ENCODE measurements at regions of chr6 and their contacts with region 1.

Region 1: DNA sequence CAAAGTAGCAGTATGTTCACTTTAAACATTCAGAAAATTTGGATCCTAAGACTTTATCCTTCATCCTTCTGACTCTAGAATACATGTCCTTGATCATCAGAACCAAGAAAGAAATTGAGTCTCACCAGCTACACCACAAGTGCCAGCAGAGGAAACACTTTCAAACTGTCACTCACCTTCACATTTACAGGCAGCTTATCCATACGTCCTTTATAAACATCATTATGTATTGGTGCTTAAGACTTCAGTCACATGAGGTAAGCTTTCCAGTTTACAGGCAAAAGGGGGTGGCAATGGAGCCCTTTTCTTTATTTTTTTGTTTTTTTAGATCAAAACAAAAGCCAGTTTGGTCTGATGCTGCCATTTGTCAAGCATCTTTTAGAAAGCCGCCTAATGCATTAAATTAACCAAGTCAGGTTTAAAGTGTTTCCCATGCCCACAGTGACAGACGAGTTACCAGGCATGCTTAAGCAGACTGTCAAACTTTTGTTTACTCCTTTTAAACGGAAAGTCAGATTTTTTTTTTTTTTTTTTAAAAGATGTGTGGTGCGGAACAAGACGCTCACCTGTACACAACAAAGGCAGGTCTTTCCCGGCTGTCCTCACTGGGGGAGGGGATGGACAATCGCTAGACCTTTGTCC is 952 bp upstream of the BRPF3 start:
- DNase-seq: no peak
- H3K4me3 Mint-ChIP-seq: peak overlapping the region; percentile 74
- H3K27ac Mint-ChIP-seq: peak overlapping the region; percentile 89
- H3K4me1 Mint-ChIP-seq: peaks cover 29% of the 10 kb centered on the region
- H3K27me3 Mint-ChIP-seq: peaks cover 7% of the 10 kb centered on the region

Region 2: DNA sequence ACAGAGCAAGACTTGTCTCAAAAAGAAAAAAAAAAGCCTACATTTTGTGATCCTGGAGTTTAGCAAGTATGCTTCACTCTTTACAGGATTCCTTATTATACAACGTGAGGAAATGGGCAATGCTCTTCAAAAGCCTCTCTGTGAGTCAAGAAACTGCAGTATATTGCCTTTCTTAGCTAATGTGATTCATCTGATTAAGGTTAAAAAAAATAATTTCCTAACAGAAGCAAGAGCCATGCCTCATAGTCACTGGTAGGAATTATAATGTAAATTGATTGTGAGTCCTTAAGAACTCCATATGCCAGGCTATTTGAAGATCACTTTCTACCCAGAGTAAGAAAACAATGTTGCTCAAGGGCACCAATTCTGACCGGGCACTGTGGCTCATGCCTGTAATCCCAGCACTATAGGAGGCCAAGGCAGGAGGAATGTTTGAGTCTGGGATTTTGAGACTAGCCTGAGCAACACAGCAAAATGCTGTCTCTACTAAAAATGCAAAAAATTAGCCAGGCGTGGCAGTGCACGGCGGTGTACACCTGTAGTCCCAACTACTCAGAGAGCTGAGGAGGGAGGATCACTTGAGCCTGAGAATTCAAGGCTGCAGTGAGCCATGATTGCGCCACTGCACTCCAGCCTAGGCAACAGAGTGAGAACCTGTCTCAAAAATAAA is 214.5 kb before region 1 on chr6:
- CTCF ChIA-PET with region 1: no interaction called
- DNase-seq: no peak
- H3K4me3 Mint-ChIP-seq: no peak overlapping the region
- H3K27ac Mint-ChIP-seq: no peak overlapping the region
- H3K4me1 Mint-ChIP-seq: no peaks in the 10 kb centered on the region
- H3K27me3 Mint-ChIP-seq: peaks cover 30% of the 10 kb centered on the region

Region 3: DNA sequence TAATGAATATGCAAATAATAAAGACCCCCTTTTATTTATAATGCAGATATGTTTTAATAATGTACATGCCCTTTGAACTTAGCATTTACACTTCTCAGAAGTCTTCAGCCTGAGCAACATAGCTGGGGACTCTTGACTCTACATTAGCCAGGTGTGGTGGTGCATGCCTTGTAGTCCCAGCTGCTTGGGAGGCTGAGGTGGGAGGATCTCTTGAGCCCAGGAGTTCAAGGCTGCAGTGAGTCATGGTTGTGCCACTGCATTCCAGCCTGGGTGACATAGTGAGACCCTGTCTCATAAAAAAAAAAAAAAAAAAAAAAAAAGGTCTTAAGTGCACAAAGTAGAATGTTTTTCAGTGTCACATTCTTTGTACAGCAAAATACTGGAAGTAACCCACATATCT is 82.5 kb before region 1 on chr6:
- CTCF ChIA-PET with region 1: no interaction called
- DNase-seq: no peak
- H3K4me3 Mint-ChIP-seq: no peak overlapping the region
- H3K27ac Mint-ChIP-seq: no peak overlapping the region
- H3K4me1 Mint-ChIP-seq: peaks cover 90% of the 10 kb centered on the region
- H3K27me3 Mint-ChIP-seq: no peaks in the 10 kb centered on the region

Region 4: GRCh38 chr6:36123257-36124139 is 72.1 kb before region 1 on chr6:
- CTCF ChIA-PET with region 1: interaction called, 10 read pairs
- DNase-seq: peak; percentile 93
- H3K4me3 Mint-ChIP-seq: peak overlapping the region; percentile 10
- H3K27ac Mint-ChIP-seq: peak overlapping the region; percentile 72
- H3K4me1 Mint-ChIP-seq: peaks cover 84% of the 10 kb centered on the region
- H3K27me3 Mint-ChIP-seq: no peaks in the 10 kb centered on the region